CD8-positive, alpha-beta memory T cell (primary cell): ENCODE measurements at regions of chr10 and their contacts with region 1.

Region 1: GRCh38 chr10:119542988-119543813 is 682 bp upstream of the RGS10 start:
- DNase-seq: peak; percentile 38 to 75 (median 57)
- H3K4me3 ChIP-seq: peak overlapping the region; percentile 76
- H3K4me3 Mint-ChIP-seq: peak overlapping the region; percentile 88 to 98 (median 92)
- H3K27ac ChIP-seq: peak overlapping the region; percentile 57
- H3K27ac Mint-ChIP-seq: peak overlapping the region; percentile 79 to 99 (median 87)
- H3K4me1 ChIP-seq: peaks cover 31% of the 10 kb centered on the region
- H3K4me1 Mint-ChIP-seq: peaks cover 31 to 46% (median 37%) of the 10 kb centered on the region in 3 donors
- H3K27me3 ChIP-seq: no peaks in the 10 kb centered on the region
- H3K27me3 Mint-ChIP-seq: peaks cover 0 to 12% of the 10 kb centered on the region in 2 donors

Region 2: DNA sequence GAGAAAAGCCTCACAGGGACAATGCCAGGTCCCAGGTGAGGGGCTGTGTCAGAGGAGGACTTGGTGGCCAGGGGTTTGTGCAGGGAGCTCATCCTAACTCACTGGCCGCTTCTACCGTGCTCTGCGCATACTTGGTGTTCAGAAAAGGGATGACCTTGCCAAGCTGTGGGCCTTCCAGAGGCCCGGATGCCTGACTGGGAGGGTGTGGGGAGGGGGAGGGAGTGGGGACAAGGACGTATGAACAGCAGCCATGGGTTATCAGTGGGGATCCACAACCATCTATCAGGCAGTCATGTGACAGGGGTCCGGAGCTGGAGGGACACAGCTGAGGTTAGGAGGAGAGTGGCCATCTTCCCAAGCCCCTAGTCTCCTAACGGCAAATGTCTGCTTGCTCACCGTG is 383.9 kb before region 1 on chr10:
- CTCF ChIA-PET with region 1: no interaction called
- POLR2A ChIA-PET with region 1: no interaction called
- DNase-seq: no peak
- H3K4me3 ChIP-seq: no peak overlapping the region
- H3K4me3 Mint-ChIP-seq: no peak overlapping the region
- H3K27ac ChIP-seq: no peak overlapping the region
- H3K27ac Mint-ChIP-seq: no peak overlapping the region
- H3K4me1 ChIP-seq: peaks cover 2% of the 10 kb centered on the region
- H3K4me1 Mint-ChIP-seq: peaks cover 6 to 18% (median 7%) of the 10 kb centered on the region in 3 donors
- H3K27me3 ChIP-seq: no peaks in the 10 kb centered on the region
- H3K27me3 Mint-ChIP-seq: peaks cover 0 to 1% of the 10 kb centered on the region in 2 donors

Region 3: GRCh38 chr10:119207367-119207668 is 335.9 kb before region 1 on chr10 and contains the start of gene GRK5:
- CTCF ChIA-PET with region 1: interaction called, 36 read pairs
- POLR2A ChIA-PET with region 1: interaction called, 9 read pairs
- DNase-seq: peak; percentile 92 to 98 (median 98)
- H3K4me3 ChIP-seq: peak within 1 kb of the TSS; percentile 78
- H3K4me3 Mint-ChIP-seq: peak within 1 kb of the TSS; percentile 94 to 99 (median 96)
- H3K27ac ChIP-seq: peak within 1 kb of the TSS; percentile 57
- H3K27ac Mint-ChIP-seq: peak within 1 kb of the TSS; percentile 93 to 99 (median 98)
- H3K4me1 ChIP-seq: peaks cover 34% of the 10 kb centered on the region
- H3K4me1 Mint-ChIP-seq: peaks cover 39 to 49% (median 46%) of the 10 kb centered on the region in 3 donors
- H3K27me3 ChIP-seq: no peaks in the 10 kb centered on the region
- H3K27me3 Mint-ChIP-seq: peaks cover 0 to 2% of the 10 kb centered on the region in 2 donors
- total RNA-seq, gene GRK5: 13.6 to 13.8 TPM

Region 4: DNA sequence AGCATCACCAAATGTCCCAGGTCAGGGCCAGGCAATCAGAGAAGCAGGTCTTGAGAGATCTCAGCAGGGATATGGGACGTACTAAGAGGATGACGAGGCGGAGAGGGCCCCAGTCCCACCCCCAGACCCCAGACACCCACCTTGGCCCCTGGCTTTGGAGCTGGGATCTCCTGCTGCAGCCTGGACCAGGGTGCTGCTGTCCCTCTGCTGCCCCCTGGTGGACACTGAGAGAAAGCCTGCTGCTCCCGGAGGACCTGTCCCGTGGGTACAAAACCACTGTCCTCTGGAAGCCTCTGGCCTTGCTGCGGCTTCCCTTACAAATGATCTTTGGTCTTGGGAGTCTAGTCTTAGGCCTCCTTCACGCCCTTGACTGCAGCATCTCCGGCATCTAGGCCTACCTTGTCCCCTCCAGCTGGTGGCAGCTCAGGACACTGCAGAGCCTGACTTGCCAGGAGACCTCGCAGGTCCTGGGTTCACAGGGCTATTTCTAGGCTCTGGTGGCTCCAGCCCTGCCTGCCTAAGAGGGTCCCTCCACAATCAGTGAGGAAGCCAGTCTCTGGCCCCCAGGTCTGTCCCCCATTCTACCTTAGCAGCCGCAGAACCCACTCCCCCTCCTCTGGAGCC is 97.8 kb before region 1 on chr10:
- CTCF ChIA-PET with region 1: interaction called, 46 read pairs
- POLR2A ChIA-PET with region 1: interaction called, 9 read pairs
- DNase-seq: peak; percentile 71 to 87 (median 78)
- H3K4me3 ChIP-seq: no peak overlapping the region
- H3K4me3 Mint-ChIP-seq: no peak overlapping the region
- H3K27ac ChIP-seq: no peak overlapping the region
- H3K27ac Mint-ChIP-seq: peak overlapping the region in 3 of 8 donors; percentile 32 to 47 (median 36)
- H3K4me1 ChIP-seq: peaks cover 4% of the 10 kb centered on the region
- H3K4me1 Mint-ChIP-seq: peaks cover 8 to 14% (median 9%) of the 10 kb centered on the region in 3 donors
- H3K27me3 ChIP-seq: no peaks in the 10 kb centered on the region
- H3K27me3 Mint-ChIP-seq: no peaks in the 10 kb centered on the region

Region 5: DNA sequence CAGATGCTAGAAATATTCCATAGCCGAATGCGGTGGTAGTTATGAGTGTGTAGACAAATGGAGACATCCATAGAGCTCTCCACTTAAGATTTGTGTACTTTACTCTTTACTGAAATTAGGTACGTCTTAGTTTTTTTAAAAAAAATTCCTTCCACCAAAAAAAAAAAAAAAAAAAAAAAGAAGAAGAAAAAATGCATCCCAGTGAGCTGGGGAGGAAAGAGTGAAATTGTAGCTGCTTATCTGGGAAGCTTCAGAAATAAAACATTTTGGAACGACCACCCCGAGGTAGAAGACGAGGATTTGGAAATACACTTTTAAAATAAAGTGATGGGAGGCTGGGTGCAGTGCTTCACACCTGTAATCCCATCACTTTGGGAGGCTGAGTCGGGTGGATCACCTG is 54.5 kb before region 1 on chr10:
- CTCF ChIA-PET with region 1: interaction called, 17 read pairs
- POLR2A ChIA-PET with region 1: interaction called, 12 read pairs
- DNase-seq: no peak
- H3K4me3 ChIP-seq: no peak overlapping the region
- H3K4me3 Mint-ChIP-seq: peak overlapping the region in 6 of 7 donors; percentile 23 to 87 (median 65)
- H3K27ac ChIP-seq: no peak overlapping the region
- H3K27ac Mint-ChIP-seq: peak overlapping the region in 7 of 8 donors; percentile 37 to 96 (median 84)
- H3K4me1 ChIP-seq: peaks cover 30% of the 10 kb centered on the region
- H3K4me1 Mint-ChIP-seq: peaks cover 24 to 33% (median 27%) of the 10 kb centered on the region in 3 donors
- H3K27me3 ChIP-seq: no peaks in the 10 kb centered on the region
- H3K27me3 Mint-ChIP-seq: no peaks in the 10 kb centered on the region

Region 6: GRCh38 chr10:119517235-119518141 is 25.7 kb before region 1 on chr10:
- CTCF ChIA-PET with region 1: interaction called, 83 read pairs
- POLR2A ChIA-PET with region 1: interaction called, 24 read pairs
- DNase-seq: peak in 4 of 5 donors; percentile 18 to 69 (median 49)
- H3K4me3 ChIP-seq: peak overlapping the region; percentile 40
- H3K4me3 Mint-ChIP-seq: peak overlapping the region; percentile 62 to 89 (median 76)
- H3K27ac ChIP-seq: peak overlapping the region; percentile 58
- H3K27ac Mint-ChIP-seq: peak overlapping the region; percentile 90 to 98 (median 96)
- H3K4me1 ChIP-seq: peaks cover 60% of the 10 kb centered on the region
- H3K4me1 Mint-ChIP-seq: peaks cover 42 to 60% (median 55%) of the 10 kb centered on the region in 3 donors
- H3K27me3 ChIP-seq: no peaks in the 10 kb centered on the region
- H3K27me3 Mint-ChIP-seq: no peaks in the 10 kb centered on the region